Posterior cingulate gyrus (tissue), 11 donors: ENCODE measurements at regions of chr2 and their contacts with region 1.

Region 1: GRCh38 chr2:207625018-207625907 is at the start of gene METTL21A:
- DNase-seq: peak; percentile 73 to 98 (median 84)

Region 2: GRCh38 chr2:207437524-207438143 is 187.6 kb before region 1 on chr2:
- intact Hi-C with region 1: no loop called
- DNase-seq: no peak

Region 3: GRCh38 chr2:207529330-207530159 is 95.7 kb before region 1 on chr2 and contains the start of gene CREB1:
- intact Hi-C with region 1: loop called (anchors 1 kb)
- DNase-seq: peak; percentile 97 to 100 (median 98)

Region 4: GRCh38 chr2:207710814-207711740 is 85.8 kb after region 1 on chr2 and contains the start of gene CCNYL1:
- intact Hi-C with region 1: loop called (anchors 1 kb)
- DNase-seq: peak; percentile 98 to 100 (median 99)

Region 5: GRCh38 chr2:207724113-207724512 is 98.8 kb after region 1 on chr2:
- intact Hi-C with region 1: no loop called
- DNase-seq: no peak

Region 6: GRCh38 chr2:207734264-207734635 is 109.0 kb after region 1 on chr2:
- intact Hi-C with region 1: loop called (anchors 5 kb)
- DNase-seq: no peak

Region 7: DNA sequence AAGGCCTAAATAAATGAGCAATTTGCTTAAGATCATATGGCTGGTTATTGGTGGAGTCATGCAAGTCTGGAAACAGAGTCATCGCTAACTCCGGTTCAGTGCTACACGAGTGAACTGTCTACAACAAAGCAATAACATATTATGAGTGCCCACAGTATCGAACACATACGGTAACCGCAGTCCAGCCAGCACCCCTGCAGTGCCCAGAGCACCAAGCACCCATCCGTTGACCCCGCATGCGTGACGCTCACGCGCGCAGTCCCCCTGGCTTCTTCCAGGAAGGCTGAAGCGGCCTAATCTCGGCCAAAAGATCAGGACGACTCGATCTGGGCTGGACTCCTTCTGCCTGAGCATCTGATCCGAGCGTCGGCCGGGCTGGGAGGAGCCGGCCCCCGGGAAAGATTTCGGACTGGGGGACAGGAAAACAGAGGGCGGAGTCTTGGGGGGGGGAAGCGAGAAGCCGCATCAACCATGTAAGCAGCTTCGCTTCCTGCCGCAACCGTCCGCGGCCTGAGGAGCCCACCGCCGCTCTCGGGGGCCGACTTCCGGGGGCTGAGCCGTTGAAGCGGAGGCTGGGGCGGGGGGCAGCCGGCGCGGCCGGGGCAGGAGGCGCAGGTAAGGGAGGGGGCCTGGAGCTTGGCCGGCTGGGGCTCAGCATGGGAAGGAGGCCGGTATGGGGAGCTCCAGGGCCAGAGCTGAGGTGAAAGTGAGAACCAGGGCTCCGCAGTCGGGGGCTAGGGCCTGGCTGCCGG is 640.7 kb after region 1 on chr2 and contains the start of gene PIKFYVE:
- intact Hi-C with region 1: loop called (anchors 5 kb)
- DNase-seq: peak; percentile 97 to 100 (median 98)